ENCODE measurements at regions of chr1 and their contacts with region 1.

Region 1: GRCh38 chr1:113072757-113073478 is at the start of gene LRIG2:
- DNase-seq: peak; percentile 99
- H3K4me3 Mint-ChIP-seq: peak within 1 kb of the TSS; percentile 96
- H3K27ac Mint-ChIP-seq: peak within 1 kb of the TSS; percentile 93
- H3K4me1 Mint-ChIP-seq: peaks cover 32% of the 10 kb centered on the region
- H3K27me3 Mint-ChIP-seq: no peaks in the 10 kb centered on the region
- total RNA-seq, gene LRIG2: 13.0 to 13.8 TPM

Region 2: GRCh38 chr1:112715264-112716053 is 357.5 kb before region 1 on chr1 and contains the start of gene PPM1J:
- CTCF ChIA-PET with region 1: interaction called, 17 read pairs
- POLR2A ChIA-PET with region 1: interaction called, 3 read pairs
- DNase-seq: peak; percentile 97
- H3K4me3 Mint-ChIP-seq: peak within 1 kb of the TSS; percentile 78
- H3K27ac Mint-ChIP-seq: peak within 1 kb of the TSS; percentile 68
- H3K4me1 Mint-ChIP-seq: peaks cover 25% of the 10 kb centered on the region
- H3K27me3 Mint-ChIP-seq: peaks cover 47% of the 10 kb centered on the region
- total RNA-seq, gene PPM1J: not detected

Region 3: GRCh38 chr1:112935461-112936289 is 137.2 kb before region 1 on chr1:
- CTCF ChIA-PET with region 1: interaction called, 12 read pairs
- POLR2A ChIA-PET with region 1: no interaction called
- DNase-seq: no peak
- H3K4me3 Mint-ChIP-seq: no peak overlapping the region
- H3K27ac Mint-ChIP-seq: peak overlapping the region; percentile 70
- H3K4me1 Mint-ChIP-seq: peaks cover 36% of the 10 kb centered on the region
- H3K27me3 Mint-ChIP-seq: no peaks in the 10 kb centered on the region

Region 4: DNA sequence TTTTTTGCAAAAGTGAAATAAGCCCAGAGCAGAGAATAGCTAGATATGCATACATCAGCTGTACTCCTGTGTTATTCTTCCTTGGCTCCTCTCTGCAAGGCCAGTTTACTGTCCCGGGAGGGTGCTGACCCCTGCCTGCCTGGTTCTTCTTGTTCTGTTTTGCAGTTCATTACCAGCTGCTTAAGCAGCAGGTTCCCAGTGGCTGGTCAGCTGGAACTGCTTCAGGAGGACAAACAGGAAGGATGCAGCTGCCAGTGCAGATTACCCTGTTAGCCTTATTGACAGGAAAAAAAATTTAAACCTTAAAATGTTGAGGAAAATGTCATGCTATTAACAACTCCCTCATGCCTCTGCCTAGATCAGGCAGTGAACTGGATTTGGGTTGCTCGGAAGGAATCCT is 15.9 kb before region 1 on chr1:
- CTCF ChIA-PET with region 1: interaction called, 37 read pairs
- POLR2A ChIA-PET with region 1: no interaction called
- DNase-seq: no peak
- H3K4me3 Mint-ChIP-seq: no peak overlapping the region
- H3K27ac Mint-ChIP-seq: no peak overlapping the region
- H3K4me1 Mint-ChIP-seq: peaks cover 25% of the 10 kb centered on the region
- H3K27me3 Mint-ChIP-seq: no peaks in the 10 kb centered on the region

Region 5: GRCh38 chr1:113096493-113096892 is 23.6 kb after region 1 on chr1:
- CTCF ChIA-PET with region 1: interaction called, 14 read pairs
- POLR2A ChIA-PET with region 1: no interaction called
- DNase-seq: no peak
- H3K4me3 Mint-ChIP-seq: no peak overlapping the region
- H3K27ac Mint-ChIP-seq: no peak overlapping the region
- H3K4me1 Mint-ChIP-seq: peaks cover 5% of the 10 kb centered on the region
- H3K27me3 Mint-ChIP-seq: no peaks in the 10 kb centered on the region